Sciatic nerve (tissue), 2 donors: ENCODE measurements at regions of chr20 and their contacts with region 1.

Region 1: DNA sequence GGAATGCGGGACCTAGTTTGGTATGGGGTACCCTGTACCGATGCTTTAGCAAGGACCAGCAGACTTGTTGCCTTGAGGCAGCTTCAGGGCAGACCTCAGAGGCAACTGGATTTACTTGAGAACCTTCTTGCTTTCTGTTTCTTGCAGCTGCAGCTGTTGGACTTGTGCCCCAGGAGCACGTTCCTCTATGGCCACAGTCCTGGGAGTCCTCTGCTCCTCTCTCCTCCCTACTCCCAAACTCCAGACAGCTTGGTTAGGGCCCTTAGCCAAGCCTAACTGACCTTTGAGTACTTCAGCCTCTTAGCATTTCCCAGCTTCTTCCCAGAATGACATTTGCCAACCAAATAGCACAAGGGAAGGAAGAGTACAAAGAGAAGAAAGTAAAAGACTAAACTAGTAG is 34.7 kb downstream of the GHRH start:
- DNase-seq: peak; percentile 77
- ATAC-seq: peak; percentile 96

Region 2: DNA sequence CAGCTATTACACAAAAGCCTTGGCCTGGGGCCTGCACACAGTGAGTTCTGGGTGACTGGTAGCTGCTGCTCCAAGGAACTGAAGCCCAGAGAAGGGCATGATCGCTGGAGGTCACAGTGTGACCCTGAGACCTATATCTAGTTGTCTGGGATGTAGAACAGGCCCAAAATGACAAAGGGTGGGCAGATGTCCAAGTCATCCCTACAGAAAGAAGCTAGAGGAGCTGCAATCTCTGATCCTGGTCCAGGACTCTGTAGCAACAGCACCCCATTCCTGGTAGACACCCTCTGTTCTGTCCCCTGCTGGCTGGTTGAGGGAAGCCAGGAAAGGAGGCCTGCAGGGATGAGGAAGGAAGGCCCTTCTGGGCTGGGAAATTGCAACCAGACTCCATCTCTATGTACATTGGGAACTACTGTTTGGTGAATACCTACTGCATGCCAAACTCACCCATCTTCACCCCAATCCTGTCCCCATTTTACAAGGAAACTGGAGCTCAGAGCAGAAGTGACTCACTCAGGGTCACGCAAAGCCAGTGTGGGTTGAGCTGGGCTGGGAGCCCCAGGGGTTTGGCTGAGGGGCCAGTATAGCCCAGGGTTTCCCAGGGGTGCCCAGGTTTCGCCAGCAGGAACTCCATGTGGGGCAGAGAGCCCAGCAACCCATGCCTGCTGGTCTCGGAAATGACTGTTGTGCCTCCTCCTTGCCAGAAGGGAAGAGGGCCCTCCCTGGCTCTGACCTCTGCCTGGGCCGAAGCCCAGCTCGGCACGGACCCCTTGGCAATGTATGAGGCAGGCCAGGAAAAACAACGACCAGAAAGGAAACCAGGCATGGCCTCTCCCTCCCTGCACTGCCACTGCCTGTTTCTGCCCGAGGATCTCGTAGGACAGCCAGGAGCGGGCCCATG is 395.8 kb before region 1 on chr20:
- intact Hi-C with region 1: loop called (anchors 5 kb)
- DNase-seq: no peak
- ATAC-seq: peak; percentile 27

Region 3: GRCh38 chr20:37867289-37868195 is 640.7 kb after region 1 on chr20:
- intact Hi-C with region 1: no loop called
- DNase-seq: no peak
- ATAC-seq: no peak

Region 4: DNA sequence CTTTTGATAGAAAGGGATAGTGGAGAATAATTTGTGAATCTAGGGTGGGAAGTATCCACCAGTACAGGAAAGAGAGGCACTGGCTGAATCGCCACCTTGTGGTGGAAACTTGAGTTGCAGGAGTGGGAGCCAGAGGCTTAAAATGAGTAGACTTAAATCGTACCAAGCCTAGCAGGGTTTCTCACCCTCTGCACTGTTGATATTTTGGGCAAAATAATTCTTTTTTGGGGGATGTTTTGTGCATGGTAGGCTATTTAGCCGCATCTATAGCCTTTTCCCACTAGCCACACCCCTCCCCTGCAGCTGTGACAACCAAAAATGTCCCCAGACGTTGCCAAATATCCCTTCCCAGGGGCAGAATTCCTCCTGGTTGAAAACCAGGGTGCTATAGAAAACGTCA is 1854.4 kb after region 1 on chr20:
- intact Hi-C with region 1: no loop called
- DNase-seq: peak; percentile 89
- ATAC-seq: peak; percentile 79